ENCODE measurements at regions of chr16 and their contacts with region 1.

Region 1: DNA sequence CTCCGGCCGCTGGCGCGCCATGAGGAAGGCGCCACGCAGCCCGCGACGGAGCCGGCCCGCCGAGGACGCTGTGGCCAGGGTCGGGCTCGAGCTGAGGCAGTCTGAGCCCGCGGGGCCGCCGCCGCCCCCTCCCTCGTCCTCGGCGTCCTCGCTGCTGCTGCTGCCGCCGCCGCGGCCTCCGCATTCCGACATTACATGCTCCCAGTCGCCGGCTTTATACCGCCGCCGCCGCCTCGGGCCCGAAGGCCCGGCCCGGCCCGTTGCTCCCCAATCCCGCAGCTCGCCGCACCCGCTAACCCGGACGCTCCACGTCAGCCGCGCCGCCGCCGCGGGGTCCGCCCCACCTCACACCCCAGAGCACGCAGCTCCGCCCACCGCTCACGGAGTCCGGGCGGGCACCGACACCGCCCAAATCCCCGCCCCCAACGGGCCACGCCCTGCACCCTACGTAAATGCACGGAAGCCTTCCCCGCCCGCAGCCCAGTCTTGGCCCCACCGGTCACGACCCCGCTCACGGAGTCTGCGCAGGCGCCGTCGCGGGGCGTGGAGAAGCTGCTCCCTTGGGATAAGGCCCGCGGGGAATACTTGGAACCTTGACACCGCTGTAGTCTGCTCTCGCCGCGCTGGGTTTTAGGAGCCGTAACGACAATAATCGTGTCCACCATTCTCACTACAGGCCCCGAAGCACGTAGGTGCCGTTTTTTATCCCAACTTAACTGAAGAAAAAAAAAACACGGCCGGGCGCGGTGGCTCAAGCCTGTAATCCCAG is at the start of gene TXNDC11:
- DNase-seq: peak; percentile 97 to 99 (median 99)
- H3K4me3 ChIP-seq: peak within 1 kb of the TSS; percentile 96 to 99 (median 98)
- H3K4me3 Mint-ChIP-seq: peak within 1 kb of the TSS; percentile 94 to 96
- H3K27ac ChIP-seq: peak within 1 kb of the TSS; percentile 99 to 100
- H3K27ac Mint-ChIP-seq: peak within 1 kb of the TSS; percentile 98 to 100 (median 99)
- H3K4me1 ChIP-seq: peaks cover 39 to 56% of the 10 kb centered on the region in 2 donors
- H3K4me1 Mint-ChIP-seq: peaks cover 54% of the 10 kb centered on the region
- H3K27me3 ChIP-seq: no peaks in the 10 kb centered on the region
- H3K27me3 Mint-ChIP-seq: peaks cover 0 to 2% (median 0%) of the 10 kb centered on the region in 3 donors
- CTCF ChIP-seq: no peak
- polyA plus RNA-seq, gene TXNDC11: 32.9 to 60.0 (median 40.6) TPM

Region 2: GRCh38 chr16:11698271-11698689 is 44.4 kb before region 1 on chr16:
- intact Hi-C with region 1: no loop called
- DNase-seq: no peak
- H3K4me3 ChIP-seq: no peak overlapping the region
- H3K4me3 Mint-ChIP-seq: no peak overlapping the region
- H3K27ac ChIP-seq: peak overlapping the region in 1 of 2 donors; percentile 38
- H3K27ac Mint-ChIP-seq: peak overlapping the region in 3 of 7 donors; percentile 38 to 74 (median 56)
- H3K4me1 ChIP-seq: peaks cover 20 to 24% of the 10 kb centered on the region in 2 donors
- H3K4me1 Mint-ChIP-seq: peaks cover 30% of the 10 kb centered on the region
- H3K27me3 ChIP-seq: no peaks in the 10 kb centered on the region
- H3K27me3 Mint-ChIP-seq: peaks cover 0 to 3% (median 0%) of the 10 kb centered on the region in 3 donors
- CTCF ChIP-seq: no peak

Region 3: GRCh38 chr16:11783319-11784037 is 40.8 kb after region 1 on chr16:
- intact Hi-C with region 1: loop called in 1 of 2 experiments (anchors 5 kb)
- DNase-seq: peak; percentile 21 to 62 (median 29)
- H3K4me3 ChIP-seq: peak overlapping the region; percentile 12 to 62 (median 40)
- H3K4me3 Mint-ChIP-seq: peak overlapping the region; percentile 72 to 79
- H3K27ac ChIP-seq: peak overlapping the region; percentile 55 to 89
- H3K27ac Mint-ChIP-seq: peak overlapping the region; percentile 90 to 96 (median 94)
- H3K4me1 ChIP-seq: peaks cover 23 to 29% of the 10 kb centered on the region in 2 donors
- H3K4me1 Mint-ChIP-seq: peaks cover 31% of the 10 kb centered on the region
- H3K27me3 ChIP-seq: no peaks in the 10 kb centered on the region
- H3K27me3 Mint-ChIP-seq: peaks cover 0 to 1% (median 0%) of the 10 kb centered on the region in 3 donors
- CTCF ChIP-seq: no peak

Region 4: GRCh38 chr16:11797166-11797956 is 54.6 kb after region 1 on chr16 and contains the start of gene ZC3H7A:
- intact Hi-C with region 1: loop called (anchors 5 kb)
- DNase-seq: peak; percentile 95 to 98 (median 97)
- H3K4me3 ChIP-seq: peak within 1 kb of the TSS; percentile 78 to 99 (median 98)
- H3K4me3 Mint-ChIP-seq: peak within 1 kb of the TSS; percentile 92 to 99
- H3K27ac ChIP-seq: peak within 1 kb of the TSS; percentile 99 to 100
- H3K27ac Mint-ChIP-seq: peak within 1 kb of the TSS; percentile 97 to 99 (median 98)
- H3K4me1 ChIP-seq: peaks cover 55 to 73% of the 10 kb centered on the region in 2 donors
- H3K4me1 Mint-ChIP-seq: peaks cover 72% of the 10 kb centered on the region
- H3K27me3 ChIP-seq: no peaks in the 10 kb centered on the region
- H3K27me3 Mint-ChIP-seq: peaks cover 0 to 4% (median 1%) of the 10 kb centered on the region in 3 donors
- CTCF ChIP-seq: peak; percentile 78
- polyA plus RNA-seq, gene ZC3H7A: 22.6 to 62.0 (median 27.5) TPM

Region 5: GRCh38 chr16:11806721-11807120 is 64.0 kb after region 1 on chr16:
- intact Hi-C with region 1: loop called in 1 of 2 experiments (anchors 5 kb)
- DNase-seq: no peak
- H3K4me3 ChIP-seq: no peak overlapping the region
- H3K4me3 Mint-ChIP-seq: no peak overlapping the region
- H3K27ac ChIP-seq: no peak overlapping the region
- H3K27ac Mint-ChIP-seq: no peak overlapping the region
- H3K4me1 ChIP-seq: peaks cover 20 to 29% of the 10 kb centered on the region in 2 donors
- H3K4me1 Mint-ChIP-seq: peaks cover 18% of the 10 kb centered on the region
- H3K27me3 ChIP-seq: no peaks in the 10 kb centered on the region
- H3K27me3 Mint-ChIP-seq: peaks cover 4 to 12% (median 4%) of the 10 kb centered on the region in 3 donors
- CTCF ChIP-seq: no peak

Region 6: DNA sequence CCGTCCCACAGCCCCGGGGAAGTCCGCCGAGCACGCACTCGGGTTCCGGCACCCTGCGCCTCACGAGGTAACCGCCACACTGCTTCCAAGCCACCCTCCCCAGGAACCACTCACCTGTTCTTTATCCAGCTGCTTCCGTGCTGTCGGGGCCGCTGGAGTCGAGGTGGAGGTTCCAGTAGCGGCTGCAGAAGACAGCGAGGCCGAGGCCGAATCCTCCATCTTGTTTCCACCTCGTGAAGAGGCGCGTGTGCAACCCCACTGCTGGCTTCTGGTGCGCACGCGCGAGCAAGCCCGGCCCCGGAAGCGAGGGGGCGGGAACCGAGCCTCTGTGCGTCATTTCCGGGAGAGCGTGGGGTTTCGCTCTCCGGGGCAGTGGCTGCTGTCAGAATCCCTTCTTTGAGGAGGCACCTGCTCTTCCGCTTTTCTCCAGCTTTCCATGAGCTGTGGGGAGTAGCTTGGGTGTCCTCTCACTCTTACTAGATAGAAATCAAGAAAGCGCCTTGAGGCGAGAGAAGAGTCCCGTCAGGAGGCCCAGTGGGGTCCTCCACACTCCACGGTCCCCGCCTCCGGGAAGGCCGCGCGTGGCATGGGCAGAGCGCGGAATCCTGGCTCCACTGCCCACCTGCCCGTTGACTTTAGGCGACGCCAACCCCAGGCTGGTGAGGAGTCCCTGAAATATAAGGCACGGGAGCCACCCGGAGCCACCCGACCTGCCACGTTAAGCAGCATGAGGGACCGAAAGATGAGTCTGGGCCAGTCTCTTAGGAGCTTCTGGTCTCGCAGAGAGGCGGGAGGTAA is 108.8 kb after region 1 on chr16 and contains the start of gene RSL1D1:
- intact Hi-C with region 1: loop called in 1 of 2 experiments (anchors 5 kb)
- DNase-seq: peak; percentile 90 to 96 (median 96)
- H3K4me3 ChIP-seq: peak within 1 kb of the TSS; percentile 79 to 94 (median 85)
- H3K4me3 Mint-ChIP-seq: peak within 1 kb of the TSS; percentile 95 to 96
- H3K27ac ChIP-seq: peak within 1 kb of the TSS; percentile 81 to 95
- H3K27ac Mint-ChIP-seq: peak within 1 kb of the TSS; percentile 95 to 98 (median 97)
- H3K4me1 ChIP-seq: peaks cover 19 to 26% of the 10 kb centered on the region in 2 donors
- H3K4me1 Mint-ChIP-seq: peaks cover 30% of the 10 kb centered on the region
- H3K27me3 ChIP-seq: no peaks in the 10 kb centered on the region
- H3K27me3 Mint-ChIP-seq: peaks cover 0 to 2% (median 2%) of the 10 kb centered on the region in 3 donors
- CTCF ChIP-seq: no peak
- polyA plus RNA-seq, gene RSL1D1: 46.1 to 182 (median 124) TPM

Measured in CD14-positive monocyte (primary cell).